PC-9 (cell line): ENCODE measurements at regions of chr3 and their contacts with region 1.

Region 1: DNA sequence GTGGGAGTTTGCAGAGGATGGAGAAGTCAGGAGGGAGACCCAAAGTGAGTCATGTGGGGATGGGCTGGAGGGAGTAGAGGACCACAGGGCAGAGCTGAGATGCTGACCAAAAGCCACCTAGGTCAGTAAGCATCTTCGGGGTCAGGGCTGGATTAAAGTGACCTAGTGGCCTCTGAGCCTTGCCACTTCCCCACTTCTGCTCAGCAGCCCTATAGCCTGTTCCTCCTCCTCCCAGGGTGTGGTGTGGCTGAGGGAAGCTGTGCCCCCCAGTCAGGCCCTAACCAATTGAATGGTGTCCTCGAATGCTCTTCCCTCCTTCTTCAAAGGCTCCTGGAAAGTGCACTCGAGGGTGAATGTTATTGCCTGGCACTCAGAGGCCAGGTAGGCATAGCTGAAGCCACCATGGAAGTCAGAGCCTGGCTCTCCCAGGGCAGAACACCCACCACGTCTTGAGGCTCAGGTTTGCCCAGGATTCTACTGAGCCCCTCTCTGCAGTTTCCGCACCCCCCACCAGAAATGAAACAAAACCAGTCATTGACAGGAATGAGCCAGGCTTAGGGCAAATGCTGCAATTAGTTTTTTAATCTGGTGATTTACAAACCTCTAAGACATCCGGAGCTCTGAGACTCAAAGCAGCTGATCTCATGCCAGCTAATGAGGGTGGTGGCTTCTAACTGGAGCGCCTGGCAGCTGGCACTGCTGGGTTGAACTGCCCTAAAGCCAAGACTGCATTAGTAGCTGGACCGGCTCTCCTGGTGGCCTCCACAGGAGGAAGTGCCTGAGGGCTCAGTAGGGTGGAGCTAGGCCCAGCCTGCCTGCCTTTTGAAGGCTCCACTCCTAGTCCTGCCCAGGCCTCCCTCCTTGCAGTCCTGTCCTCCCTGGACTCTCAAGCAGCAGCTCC is 26.0 kb upstream of the VIPR1 start:
- DNase-seq: peak; percentile 93 to 97
- H3K4me3 ChIP-seq: no peak overlapping the region
- H3K27ac ChIP-seq: peak overlapping the region; percentile 86
- H3K4me1 ChIP-seq: peaks cover 62% of the 10 kb centered on the region
- H3K27me3 ChIP-seq: no peaks in the 10 kb centered on the region
- CTCF ChIP-seq: no peak

Region 2: DNA sequence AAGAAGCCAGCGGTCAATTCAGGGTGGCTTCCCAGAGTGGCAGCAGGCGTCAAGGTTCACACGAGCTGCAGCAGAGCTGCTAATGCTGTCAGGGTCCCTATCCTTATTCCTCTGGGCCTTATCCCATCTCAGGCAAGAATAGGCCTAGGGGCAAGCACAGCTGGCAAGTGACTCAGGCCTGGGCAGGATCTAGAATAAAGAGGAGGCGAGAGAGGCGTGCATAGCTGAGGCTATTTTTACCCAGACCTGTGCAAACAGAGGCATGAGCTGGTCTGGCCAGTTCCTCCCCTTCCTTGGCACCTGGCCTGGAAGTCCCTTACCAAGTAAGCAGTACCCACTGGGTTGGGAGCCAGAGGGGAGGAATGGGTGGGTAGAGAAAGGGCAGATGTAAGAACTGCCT is 13.8 kb after region 1 on chr3:
- CTCF ChIA-PET with region 1: no interaction called
- POLR2A ChIA-PET with region 1: interaction called, 11 read pairs
- intact Hi-C with region 1: loop called (anchors 1 kb)
- DNase-seq: peak; percentile 90 to 97
- H3K4me3 ChIP-seq: no peak overlapping the region
- H3K27ac ChIP-seq: peak overlapping the region; percentile 89
- H3K4me1 ChIP-seq: peaks cover 49% of the 10 kb centered on the region
- H3K27me3 ChIP-seq: no peaks in the 10 kb centered on the region
- CTCF ChIP-seq: no peak